Thyroid gland (tissue), 4 donors: ENCODE measurements at regions of chr11 and their contacts with region 1.

Region 1: GRCh38 chr11:121575250-121575962 is 122.6 kb upstream of the SORL1-AS1 start:
- DNase-seq: peak; percentile 22 to 28
- H3K4me3 ChIP-seq: no peak overlapping the region
- H3K27ac ChIP-seq: peak overlapping the region; percentile 35 to 43 (median 43)
- H3K4me1 ChIP-seq: peaks cover 25 to 30% of the 10 kb centered on the region in 2 donors
- H3K27me3 ChIP-seq: no peaks in the 10 kb centered on the region
- CTCF ChIP-seq: no peak
- POLR2A ChIP-seq: no peak

Region 2: DNA sequence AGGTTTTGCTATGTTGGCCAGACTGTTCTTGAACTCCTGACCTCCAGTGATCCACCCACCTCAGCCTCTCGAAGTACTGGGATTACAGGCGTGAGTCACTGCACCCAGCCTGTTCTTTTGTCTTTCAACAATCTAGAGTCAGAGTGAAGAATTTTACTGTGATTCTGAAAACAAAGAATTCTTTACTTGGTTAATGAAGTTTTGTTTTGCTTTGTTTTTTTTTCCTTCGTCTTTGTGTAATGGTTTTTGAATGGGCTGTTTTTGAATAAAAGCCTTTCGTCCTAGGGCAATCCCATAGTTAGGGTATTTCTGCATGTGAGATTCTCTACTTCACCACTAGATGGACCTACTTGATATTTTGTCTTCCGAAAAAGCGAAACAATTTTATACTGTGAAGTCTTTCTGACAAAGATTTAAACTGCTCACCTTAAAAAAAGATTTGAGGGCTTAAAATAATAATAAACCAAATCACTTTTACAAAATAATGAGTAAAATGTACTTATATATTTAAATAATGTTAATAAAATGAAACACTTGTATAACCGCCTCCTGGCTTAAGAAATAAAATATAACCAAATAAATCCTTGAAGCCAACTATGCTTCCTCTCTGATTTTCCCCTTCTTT is 326.3 kb before region 1 on chr11:
- intact Hi-C with region 1: no loop called
- DNase-seq: peak in 1 of 2 donors; percentile 7
- H3K4me3 ChIP-seq: no peak overlapping the region
- H3K27ac ChIP-seq: peak overlapping the region in 1 of 3 donors; percentile 4
- H3K4me1 ChIP-seq: peaks cover 0 to 12% of the 10 kb centered on the region in 2 donors
- H3K27me3 ChIP-seq: no peaks in the 10 kb centered on the region
- CTCF ChIP-seq: peak; percentile 35 to 81 (median 66)
- POLR2A ChIP-seq: no peak

Region 3: DNA sequence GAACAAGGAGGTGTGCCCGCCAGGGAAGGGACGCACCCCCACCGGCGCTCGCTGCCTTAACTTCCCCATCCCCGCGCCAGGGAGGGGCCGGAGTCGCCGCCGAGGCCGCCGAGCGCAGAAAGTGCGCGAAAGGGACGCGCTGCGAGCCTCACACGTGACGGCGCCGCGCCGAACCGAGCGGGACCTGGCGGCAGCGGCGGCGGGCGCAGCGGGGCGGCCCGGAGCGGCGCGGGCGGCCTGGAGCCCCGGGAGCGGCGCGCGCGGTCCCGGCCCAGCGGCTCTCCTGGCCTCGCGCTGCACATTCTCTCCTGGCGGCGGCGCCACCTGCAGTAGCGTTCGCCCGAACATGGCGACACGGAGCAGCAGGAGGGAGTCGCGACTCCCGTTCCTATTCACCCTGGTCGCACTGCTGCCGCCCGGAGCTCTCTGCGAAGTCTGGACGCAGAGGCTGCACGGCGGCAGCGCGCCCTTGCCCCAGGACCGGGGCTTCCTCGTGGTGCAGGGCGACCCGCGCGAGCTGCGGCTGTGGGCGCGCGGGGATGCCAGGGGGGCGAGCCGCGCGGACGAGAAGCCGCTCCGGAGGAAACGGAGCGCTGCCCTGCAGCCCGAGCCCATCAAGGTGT is 123.3 kb before region 1 on chr11 and contains the start of gene SORL1:
- intact Hi-C with region 1: loop called (anchors 10 kb)
- DNase-seq: peak; percentile 83 to 87
- H3K4me3 ChIP-seq: peak within 1 kb of the TSS; percentile 51 to 68 (median 64)
- H3K27ac ChIP-seq: peak within 1 kb of the TSS; percentile 63 to 75 (median 74)
- H3K4me1 ChIP-seq: peaks cover 13 to 15% of the 10 kb centered on the region in 2 donors
- H3K27me3 ChIP-seq: no peaks in the 10 kb centered on the region
- CTCF ChIP-seq: peak in 4 of 6 experiments; percentile 43 to 83 (median 76)
- POLR2A ChIP-seq: peak in 1 of 2 donors; percentile 66
- total RNA-seq, gene SORL1: 19.6 to 73.8 (median 53.6) TPM